ENCODE measurements at regions of chr6 and their contacts with region 1.

Region 1: DNA sequence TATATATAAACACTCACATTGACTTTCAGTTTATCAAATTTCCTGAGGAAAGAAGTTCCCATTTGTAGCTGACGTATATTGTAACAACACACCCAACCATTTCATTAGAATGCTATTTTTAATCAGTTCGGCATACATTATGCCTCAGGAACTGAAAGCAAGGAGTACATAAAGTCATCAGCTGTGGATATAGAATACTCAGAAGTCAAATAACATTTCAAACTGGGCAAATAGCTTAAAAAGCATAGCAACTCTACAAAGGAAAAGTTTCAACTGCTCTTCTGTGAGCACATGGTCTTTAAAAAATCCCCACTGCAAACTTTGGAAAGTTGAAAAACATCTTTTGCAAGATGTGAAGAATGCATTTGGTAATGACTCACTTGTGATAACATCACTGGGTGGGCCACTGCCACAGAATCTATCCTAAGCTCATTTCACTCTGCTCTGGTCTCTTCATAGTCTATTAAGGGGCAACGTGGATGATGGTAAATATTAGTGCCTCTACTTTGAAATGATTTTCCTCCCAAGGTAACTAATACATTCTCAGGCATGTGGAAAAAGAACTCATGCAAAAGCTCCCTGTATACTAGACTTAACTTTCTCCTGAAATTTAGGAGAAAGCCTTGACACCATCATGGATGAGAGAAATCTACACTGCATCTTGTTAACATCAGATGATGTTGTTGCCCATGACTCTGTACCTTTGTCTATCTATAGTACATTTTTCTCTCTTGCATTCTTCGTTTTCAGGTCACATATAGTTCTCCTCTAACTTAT is 49.2 kb downstream of the FYN start:
- DNase-seq: peak; percentile 49
- ATAC-seq: peak; percentile 64
- H3K4me3 Mint-ChIP-seq: peak overlapping the region; percentile 63
- H3K27ac Mint-ChIP-seq: peak overlapping the region; percentile 97
- H3K4me1 Mint-ChIP-seq: peaks cover 89% of the 10 kb centered on the region
- H3K27me3 Mint-ChIP-seq: no peaks in the 10 kb centered on the region

Region 2: DNA sequence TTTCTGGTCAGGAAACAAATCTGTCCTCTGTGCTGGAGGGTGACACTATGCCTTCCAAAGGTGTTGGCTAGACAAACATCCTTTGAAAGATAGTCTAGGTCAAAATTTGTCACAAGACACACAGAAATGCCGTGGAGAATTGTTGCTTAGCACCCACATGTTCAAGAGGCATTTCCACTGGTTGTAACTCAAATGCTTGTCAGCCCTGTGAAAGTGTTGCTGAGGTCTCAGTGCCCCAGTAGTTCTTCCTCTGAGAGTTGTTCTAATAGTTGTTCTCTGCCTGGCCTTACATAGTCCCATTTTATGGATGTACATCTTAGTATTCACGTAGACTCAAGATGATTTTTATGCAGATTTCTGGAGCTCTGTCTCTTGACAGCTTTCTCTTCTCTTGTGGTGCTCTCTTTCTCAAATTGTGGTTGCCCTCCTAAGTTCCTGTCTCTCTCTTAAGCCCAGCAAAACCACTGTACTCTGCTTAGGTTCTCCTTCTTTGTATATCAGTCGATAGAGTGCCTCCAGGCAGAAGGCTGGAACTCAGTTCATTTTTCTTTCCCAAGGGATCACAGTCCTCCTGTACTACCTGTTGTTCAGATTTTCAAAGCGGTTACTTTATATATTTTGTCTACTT is 301.5 kb before region 1 on chr6:
- CTCF ChIA-PET with region 1: no interaction called
- POLR2A ChIA-PET with region 1: no interaction called
- intact Hi-C with region 1: no loop called
- DNase-seq: no peak
- ATAC-seq: no peak
- H3K4me3 Mint-ChIP-seq: no peak overlapping the region
- H3K27ac Mint-ChIP-seq: no peak overlapping the region
- H3K4me1 Mint-ChIP-seq: peaks cover 23% of the 10 kb centered on the region
- H3K27me3 Mint-ChIP-seq: no peaks in the 10 kb centered on the region

Region 3: GRCh38 chr6:111812060-111813038 is 11.7 kb before region 1 on chr6:
- CTCF ChIA-PET with region 1: interaction called, 15 read pairs
- POLR2A ChIA-PET with region 1: interaction called, 13 read pairs
- intact Hi-C with region 1: loop called (anchors 1 kb)
- DNase-seq: no peak
- ATAC-seq: peak; percentile 36
- H3K4me3 Mint-ChIP-seq: peak overlapping the region; percentile 7
- H3K27ac Mint-ChIP-seq: peak overlapping the region; percentile 90
- H3K4me1 Mint-ChIP-seq: peaks cover 85% of the 10 kb centered on the region
- H3K27me3 Mint-ChIP-seq: no peaks in the 10 kb centered on the region

Region 4: GRCh38 chr6:111861431-111861885 is 37.4 kb after region 1 on chr6:
- CTCF ChIA-PET with region 1: interaction called, 10 read pairs
- POLR2A ChIA-PET with region 1: interaction called, 6 read pairs
- intact Hi-C with region 1: loop called in 1 of 2 experiments (anchors 1 kb)
- DNase-seq: peak; percentile 48
- ATAC-seq: peak; percentile 40
- H3K4me3 Mint-ChIP-seq: peak overlapping the region; percentile 20
- H3K27ac Mint-ChIP-seq: peak overlapping the region; percentile 91
- H3K4me1 Mint-ChIP-seq: peaks cover 100% of the 10 kb centered on the region
- H3K27me3 Mint-ChIP-seq: no peaks in the 10 kb centered on the region